ENCODE measurements at regions of chr6 and their contacts with region 1.

Region 1: GRCh38 chr6:32127717-32128592 is at the start of gene ATF6B:
- DNase-seq: peak; percentile 98 to 100 (median 99)
- ATAC-seq: peak; percentile 93 to 97 (median 96)
- H3K4me3 ChIP-seq: peak within 1 kb of the TSS; percentile 61 to 100 (median 84)
- H3K27ac ChIP-seq: peak within 1 kb of the TSS in 11 of 12 donors; percentile 82 to 94 (median 89)
- H3K4me1 ChIP-seq: peaks cover 11 to 38% (median 25%) of the 10 kb centered on the region in 12 donors
- H3K27me3 ChIP-seq: no peaks in the 10 kb centered on the region
- CTCF ChIP-seq: no peak
- POLR2A ChIP-seq: peak in 1 of 2 donors; percentile 43
- total RNA-seq, gene ATF6B: 11.1 to 56.8 (median 28.7) TPM

Region 2: DNA sequence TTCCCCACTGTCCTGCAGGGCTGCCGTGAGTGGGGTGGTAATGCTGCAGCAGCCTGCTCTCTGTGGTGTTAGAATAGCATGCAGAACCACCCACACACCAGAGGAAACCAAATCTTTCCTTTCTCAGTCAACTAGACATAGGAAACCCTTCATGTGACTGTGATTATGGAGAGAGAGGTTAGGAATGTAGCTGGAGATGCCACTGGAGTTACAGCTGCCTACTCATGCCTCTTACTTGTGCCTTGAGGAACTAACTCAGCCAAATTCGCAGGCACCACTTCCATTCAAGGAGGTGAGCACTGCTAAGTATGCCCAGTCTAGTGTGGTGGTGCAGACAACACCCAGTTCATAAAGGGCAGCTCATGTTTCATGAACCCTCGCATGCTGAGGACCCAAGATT is 1090.3 kb before region 1 on chr6:
- intact Hi-C with region 1: no loop called
- DNase-seq: no peak
- ATAC-seq: no peak
- H3K4me3 ChIP-seq: no peak overlapping the region
- H3K27ac ChIP-seq: no peak overlapping the region
- H3K4me1 ChIP-seq: peaks cover 0 to 8% (median 0%) of the 10 kb centered on the region in 12 donors
- H3K27me3 ChIP-seq: no peaks in the 10 kb centered on the region
- CTCF ChIP-seq: no peak
- POLR2A ChIP-seq: no peak

Region 3: GRCh38 chr6:31271641-31272357 is 856.2 kb before region 1 on chr6 and contains the start of gene HLA-C:
- intact Hi-C with region 1: no loop called
- DNase-seq: peak; percentile 91 to 96 (median 94)
- ATAC-seq: peak; percentile 97 to 99 (median 99)
- H3K4me3 ChIP-seq: peak within 1 kb of the TSS; percentile 47 to 99 (median 74)
- H3K27ac ChIP-seq: peak within 1 kb of the TSS; percentile 70 to 100 (median 92)
- H3K4me1 ChIP-seq: peaks cover 0 to 24% (median 2%) of the 10 kb centered on the region in 12 donors
- H3K27me3 ChIP-seq: no peaks in the 10 kb centered on the region
- CTCF ChIP-seq: peak in 2 of 12 donors; percentile 11 to 23
- POLR2A ChIP-seq: peak in 1 of 2 donors; percentile 98
- total RNA-seq, gene HLA-C: 160 to 1,096 (median 318) TPM

Region 4: DNA sequence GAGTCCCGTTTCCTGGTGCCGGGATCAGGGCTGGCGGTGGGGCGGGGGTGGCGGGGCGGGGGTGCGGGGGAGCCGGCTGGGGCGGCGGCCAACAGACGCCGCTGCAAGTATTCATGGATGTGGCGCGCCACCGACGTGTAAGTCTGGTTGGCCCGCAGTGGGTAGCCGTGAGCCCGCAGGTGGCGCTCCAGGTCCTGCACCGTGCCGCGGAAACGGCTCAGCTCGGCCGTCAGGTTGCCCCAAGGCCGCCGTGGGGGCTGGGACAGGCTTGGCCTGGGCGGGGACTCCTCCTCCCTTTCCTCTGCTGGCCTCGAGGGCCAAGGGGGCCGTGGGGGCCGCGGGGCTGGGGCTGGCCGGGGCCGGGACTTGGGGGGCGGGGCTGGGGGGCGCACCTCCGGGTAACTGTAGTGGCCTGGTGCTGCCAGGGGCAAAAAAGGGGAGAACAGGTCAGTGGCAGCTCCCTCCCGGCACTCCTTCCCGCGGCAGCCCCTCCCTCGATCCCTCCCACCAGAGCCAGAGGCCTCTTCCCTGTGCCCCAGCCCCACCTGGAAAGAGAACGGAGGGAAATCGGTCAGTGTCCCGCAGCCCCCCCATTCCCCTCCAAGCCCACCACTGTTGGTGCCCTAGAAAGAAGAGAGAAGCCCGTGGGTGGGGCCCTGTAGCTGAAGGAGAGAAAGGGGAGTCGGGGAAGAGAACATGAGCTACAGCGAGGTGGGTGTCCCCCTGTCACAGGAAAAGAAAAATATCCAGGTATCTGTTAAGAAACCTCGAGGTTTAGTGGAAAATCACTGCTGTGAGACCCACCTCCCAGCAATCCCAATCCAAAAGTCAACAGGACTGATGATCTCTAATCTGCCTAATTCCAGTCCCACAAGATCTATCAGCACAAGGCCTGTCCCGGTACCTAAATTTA is 40.1 kb before region 1 on chr6:
- intact Hi-C with region 1: loop called in 1 of 10 experiments (anchors 5 kb)
- DNase-seq: peak; percentile 87 to 89 (median 89)
- ATAC-seq: peak; percentile 75 to 88 (median 84)
- H3K4me3 ChIP-seq: peak overlapping the region in 7 of 12 donors; percentile 10 to 43 (median 31)
- H3K27ac ChIP-seq: peak overlapping the region; percentile 42 to 86 (median 79)
- H3K4me1 ChIP-seq: peaks cover 2 to 48% (median 23%) of the 10 kb centered on the region in 12 donors
- H3K27me3 ChIP-seq: peaks cover 0 to 17% (median 0%) of the 10 kb centered on the region in 9 donors
- CTCF ChIP-seq: peak; percentile 41 to 78 (median 62)
- POLR2A ChIP-seq: no peak

Region 5: DNA sequence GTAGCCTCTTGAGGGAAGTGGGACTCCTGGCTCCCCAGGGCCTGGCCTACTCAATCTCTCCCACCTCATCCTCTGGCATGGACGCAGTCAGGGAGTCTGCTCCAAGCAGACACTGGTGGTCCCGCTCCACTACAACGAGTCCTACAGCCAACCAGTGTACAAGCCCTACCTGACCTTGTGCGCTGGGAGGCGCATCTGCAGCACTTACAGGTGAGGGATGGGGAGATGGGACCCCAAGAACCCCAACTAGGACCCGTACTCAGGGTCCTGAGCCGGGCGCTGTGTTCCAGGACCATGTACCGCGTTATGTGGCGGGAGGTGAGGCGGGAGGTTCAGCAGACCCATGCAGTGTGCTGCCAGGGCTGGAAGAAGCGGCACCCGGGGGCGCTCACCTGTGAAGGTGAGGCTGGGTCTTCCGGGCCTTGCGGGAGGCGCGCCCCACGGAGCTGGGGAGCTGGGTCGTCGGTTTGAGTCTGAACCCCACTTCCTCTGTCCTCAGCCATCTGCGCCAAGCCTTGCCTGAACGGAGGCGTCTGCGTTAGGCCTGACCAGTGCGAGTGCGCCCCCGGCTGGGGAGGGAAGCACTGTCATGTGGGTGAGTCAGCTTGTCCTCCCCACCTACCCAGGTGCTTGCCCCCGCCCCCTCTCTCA is 38.6 kb after region 1 on chr6:
- intact Hi-C with region 1: loop called in 1 of 10 experiments (anchors 5 kb)
- DNase-seq: peak in 1 of 5 donors; percentile 65
- ATAC-seq: no peak
- H3K4me3 ChIP-seq: no peak overlapping the region
- H3K27ac ChIP-seq: peak overlapping the region in 1 of 12 donors; percentile 15
- H3K4me1 ChIP-seq: no peaks in the 10 kb centered on the region
- H3K27me3 ChIP-seq: no peaks in the 10 kb centered on the region
- CTCF ChIP-seq: no peak
- POLR2A ChIP-seq: no peak

Region 6: GRCh38 chr6:32177788-32178546 is 50.0 kb after region 1 on chr6 and contains the start of gene RNF5:
- intact Hi-C with region 1: loop called in 3 of 10 experiments (anchors 1 to 5 kb)
- DNase-seq: peak; percentile 92 to 98 (median 97)
- ATAC-seq: peak; percentile 82 to 89 (median 88)
- H3K4me3 ChIP-seq: peak within 1 kb of the TSS; percentile 47 to 99 (median 87)
- H3K27ac ChIP-seq: peak within 1 kb of the TSS; percentile 87 to 100 (median 97)
- H3K4me1 ChIP-seq: peaks cover 11 to 76% (median 52%) of the 10 kb centered on the region in 12 donors
- H3K27me3 ChIP-seq: no peaks in the 10 kb centered on the region
- CTCF ChIP-seq: no peak
- POLR2A ChIP-seq: peak in 1 of 2 donors; percentile 30
- total RNA-seq, gene RNF5: 62.7 to 136 (median 84.5) TPM

Region 7: DNA sequence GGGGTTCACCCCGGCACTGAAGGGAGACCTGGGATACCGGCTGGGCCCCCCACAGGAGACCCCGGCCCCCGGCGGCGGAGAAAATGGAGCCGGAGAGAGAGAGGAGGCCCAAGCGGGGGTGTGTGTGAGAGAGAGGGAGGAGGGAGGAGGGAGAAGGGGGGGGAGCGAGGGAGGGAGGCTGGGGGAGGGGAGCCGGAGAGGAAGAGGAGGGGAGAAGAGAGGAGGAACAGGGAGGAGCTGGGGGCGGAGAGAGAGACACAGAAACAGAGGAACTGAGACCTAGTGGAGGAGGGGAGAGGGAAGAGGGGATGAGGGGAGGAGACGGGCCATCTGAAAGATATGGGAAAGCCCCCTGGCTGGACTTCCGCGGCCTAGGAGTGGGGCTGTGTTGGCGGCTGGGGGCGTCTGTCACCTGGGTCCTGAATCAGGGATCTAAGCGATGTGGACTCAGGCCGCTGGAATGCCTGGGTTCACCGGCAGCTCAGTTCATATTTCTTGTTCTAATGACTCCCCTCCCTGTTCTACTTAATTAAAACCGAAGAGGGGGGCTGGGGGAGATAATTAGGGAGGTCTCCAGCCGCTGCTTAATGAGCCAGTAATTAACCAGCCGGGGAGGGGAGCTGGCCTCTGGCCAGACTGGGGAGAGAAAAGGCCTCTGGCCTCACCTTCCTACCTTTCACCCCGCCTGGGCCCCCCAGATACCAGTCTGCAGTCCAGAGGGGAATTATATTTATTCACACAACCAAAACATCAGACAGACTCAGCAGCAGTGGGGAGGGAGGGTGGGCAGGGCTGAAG is 62.3 kb after region 1 on chr6 and contains the start of gene PBX2:
- intact Hi-C with region 1: loop called in 4 of 10 experiments (anchors 1 to 5 kb)
- DNase-seq: peak; percentile 91 to 97 (median 95)
- ATAC-seq: peak; percentile 74 to 84 (median 78)
- H3K4me3 ChIP-seq: peak within 1 kb of the TSS; percentile 59 to 93 (median 80)
- H3K27ac ChIP-seq: peak within 1 kb of the TSS; percentile 90 to 100 (median 97)
- H3K4me1 ChIP-seq: peaks cover 0 to 82% (median 60%) of the 10 kb centered on the region in 12 donors
- H3K27me3 ChIP-seq: no peaks in the 10 kb centered on the region
- CTCF ChIP-seq: no peak
- POLR2A ChIP-seq: peak in 1 of 2 donors; percentile 83
- total RNA-seq, gene PBX2: 25.3 to 60.4 (median 39.7) TPM

Region 8: DNA sequence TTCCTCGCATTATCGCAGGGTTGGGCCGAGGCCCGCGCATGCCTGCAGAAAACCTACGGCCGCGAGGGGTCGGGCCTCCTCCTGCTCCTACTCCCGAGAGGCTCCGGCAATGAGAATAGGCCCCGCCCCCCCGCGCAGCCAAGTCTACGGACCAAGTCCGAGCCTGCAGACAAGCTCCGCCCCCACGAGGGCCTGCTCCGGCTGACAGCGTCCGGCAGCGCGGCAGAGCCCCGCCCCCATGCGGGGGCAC is 67.6 kb after region 1 on chr6:
- intact Hi-C with region 1: loop called in 4 of 10 experiments (anchors 1 to 5 kb)
- DNase-seq: peak; percentile 100
- ATAC-seq: peak in 3 of 4 donors; percentile 85 to 93 (median 86)
- H3K4me3 ChIP-seq: peak overlapping the region in 10 of 12 donors; percentile 65 to 93 (median 76)
- H3K27ac ChIP-seq: peak overlapping the region; percentile 92 to 100 (median 100)
- H3K4me1 ChIP-seq: peaks cover 7 to 61% (median 39%) of the 10 kb centered on the region in 12 donors
- H3K27me3 ChIP-seq: no peaks in the 10 kb centered on the region
- CTCF ChIP-seq: peak; percentile 48 to 73 (median 56)
- POLR2A ChIP-seq: no peak

Region 9: DNA sequence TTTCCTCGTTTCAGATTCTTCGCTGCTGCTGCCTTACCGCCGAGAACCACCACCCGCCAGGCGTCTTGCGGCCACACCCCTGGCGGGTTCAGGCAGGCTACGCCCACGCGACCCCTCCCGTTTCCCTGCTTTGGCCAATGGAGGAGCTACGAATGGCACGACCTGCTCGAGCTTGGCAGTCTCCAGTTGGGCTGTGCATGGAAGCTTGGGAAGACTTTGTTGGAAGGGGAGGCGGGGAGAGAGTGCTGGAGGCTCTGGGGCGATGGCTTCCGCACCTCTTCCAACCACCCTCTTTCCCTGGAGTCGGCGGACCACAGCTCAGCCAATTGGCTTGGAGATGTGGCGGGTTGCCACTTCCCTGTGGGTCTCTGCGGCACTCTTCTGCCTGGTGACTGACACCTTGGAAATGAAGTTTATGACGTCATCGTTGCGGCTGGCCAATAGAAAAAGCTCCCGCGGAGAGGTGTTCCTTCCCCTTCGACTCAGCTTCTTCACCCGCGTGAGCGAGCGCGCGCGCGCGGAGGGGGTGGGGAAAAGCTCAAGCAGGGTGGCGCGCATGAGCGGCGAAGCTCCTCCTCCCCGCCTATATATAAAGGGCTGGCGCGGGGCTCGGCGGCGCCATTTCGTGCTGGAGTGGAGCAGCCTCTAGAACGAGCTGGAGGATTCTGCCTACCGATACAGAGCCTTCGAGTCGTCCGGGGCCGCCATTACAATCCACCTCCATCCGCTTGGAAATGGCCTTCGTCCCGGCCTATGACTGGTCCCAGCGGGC is 843.8 kb after region 1 on chr6:
- intact Hi-C with region 1: loop called in 1 of 10 experiments (anchors 5 kb)
- DNase-seq: peak; percentile 99
- ATAC-seq: peak; percentile 56 to 72 (median 69)
- H3K4me3 ChIP-seq: peak overlapping the region; percentile 63 to 100 (median 90)
- H3K27ac ChIP-seq: peak overlapping the region; percentile 97 to 100 (median 100)
- H3K4me1 ChIP-seq: peaks cover 0 to 40% (median 33%) of the 10 kb centered on the region in 12 donors
- H3K27me3 ChIP-seq: no peaks in the 10 kb centered on the region
- CTCF ChIP-seq: peak in 2 of 12 donors; percentile 6 to 14
- POLR2A ChIP-seq: peak; percentile 94 to 99